ENCODE measurements at regions of chr14 and their contacts with region 1.

Region 1: GRCh38 chr14:99266181-99267178 is 5.5 kb downstream of the BCL11B start:
- DNase-seq: peak; percentile 82
- ATAC-seq: peak; percentile 11; the same call in 1 of the 2 replicates
- H3K4me3 Mint-ChIP-seq: peak overlapping the region; percentile 57
- H3K27ac Mint-ChIP-seq: peak overlapping the region; percentile 28; the same call in 1 of the 2 replicates
- H3K4me1 Mint-ChIP-seq: peaks cover 72% of the 10 kb centered on the region
- H3K27me3 Mint-ChIP-seq: no peaks in the 10 kb centered on the region; the same call in 1 of the 2 replicates
- CTCF ChIP-seq: peak; percentile 94

Region 2: GRCh38 chr14:99035712-99036610 is 230.5 kb before region 1 on chr14:
- CTCF ChIA-PET with region 1: interaction called, 15 read pairs
- POLR2A ChIA-PET with region 1: no interaction called
- DNase-seq: peak; percentile 73
- ATAC-seq: peak; percentile 86
- H3K4me3 Mint-ChIP-seq: no peak overlapping the region
- H3K27ac Mint-ChIP-seq: no peak overlapping the region
- H3K4me1 Mint-ChIP-seq: peaks cover 23% of the 10 kb centered on the region
- H3K27me3 Mint-ChIP-seq: no peaks in the 10 kb centered on the region
- CTCF ChIP-seq: no peak

Region 3: DNA sequence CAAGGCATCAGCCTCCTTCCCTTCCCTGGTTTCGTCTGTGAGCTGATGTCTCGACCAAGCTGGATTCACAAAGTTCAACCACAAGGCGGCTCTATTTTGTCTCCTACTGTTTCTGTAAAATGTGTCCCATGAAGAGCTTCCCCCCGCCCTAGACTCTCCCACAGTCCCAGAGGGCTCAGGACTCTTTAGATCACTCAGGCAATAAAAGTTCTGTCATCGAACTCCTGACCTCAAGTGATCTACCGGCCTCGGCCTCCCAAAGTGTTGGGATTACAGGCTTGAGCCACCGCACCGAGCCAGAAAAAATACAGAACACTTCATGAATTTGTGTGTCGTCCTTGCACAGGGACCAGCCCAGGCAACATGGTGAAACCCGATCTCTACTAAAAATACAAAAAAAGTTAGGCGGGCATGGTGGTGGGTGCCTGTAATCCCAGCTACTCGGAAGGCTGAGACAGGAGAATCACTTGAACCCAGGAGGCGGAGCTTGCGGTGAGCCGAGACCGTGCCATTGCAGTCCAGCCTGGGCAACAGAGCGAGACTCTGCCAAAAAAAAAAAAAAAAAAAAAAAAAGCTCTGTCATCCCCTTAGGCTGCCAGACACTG is 143.9 kb before region 1 on chr14:
- CTCF ChIA-PET with region 1: interaction called, 20 read pairs
- POLR2A ChIA-PET with region 1: no interaction called
- DNase-seq: no peak
- ATAC-seq: peak; percentile 17
- H3K4me3 Mint-ChIP-seq: no peak overlapping the region
- H3K27ac Mint-ChIP-seq: peak overlapping the region; percentile 53; the same call in 1 of the 2 replicates
- H3K4me1 Mint-ChIP-seq: peaks cover 22% of the 10 kb centered on the region
- H3K27me3 Mint-ChIP-seq: peaks cover 8% of the 10 kb centered on the region
- CTCF ChIP-seq: no peak

Region 4: GRCh38 chr14:99188731-99189191 is 77.7 kb before region 1 on chr14:
- CTCF ChIA-PET with region 1: interaction called, 17 read pairs
- POLR2A ChIA-PET with region 1: interaction called, 3 read pairs
- DNase-seq: peak; percentile 73
- ATAC-seq: peak; percentile 91
- H3K4me3 Mint-ChIP-seq: no peak overlapping the region
- H3K27ac Mint-ChIP-seq: 0 out of 2 replicates have a peak overlapping the region, but pooled peaks have one; percentile 57
- H3K4me1 Mint-ChIP-seq: peaks cover 52% of the 10 kb centered on the region
- H3K27me3 Mint-ChIP-seq: no peaks in the 10 kb centered on the region
- CTCF ChIP-seq: peak; percentile 48

Region 5: GRCh38 chr14:99224116-99224910 is 42.2 kb before region 1 on chr14:
- CTCF ChIA-PET with region 1: interaction called, 10 read pairs
- POLR2A ChIA-PET with region 1: no interaction called
- DNase-seq: peak; percentile 68
- ATAC-seq: peak; percentile 92
- H3K4me3 Mint-ChIP-seq: no peak overlapping the region
- H3K27ac Mint-ChIP-seq: peak overlapping the region; percentile 84; the same call in 1 of the 2 replicates
- H3K4me1 Mint-ChIP-seq: peaks cover 40% of the 10 kb centered on the region
- H3K27me3 Mint-ChIP-seq: no peaks in the 10 kb centered on the region
- CTCF ChIP-seq: no peak

Region 6: DNA sequence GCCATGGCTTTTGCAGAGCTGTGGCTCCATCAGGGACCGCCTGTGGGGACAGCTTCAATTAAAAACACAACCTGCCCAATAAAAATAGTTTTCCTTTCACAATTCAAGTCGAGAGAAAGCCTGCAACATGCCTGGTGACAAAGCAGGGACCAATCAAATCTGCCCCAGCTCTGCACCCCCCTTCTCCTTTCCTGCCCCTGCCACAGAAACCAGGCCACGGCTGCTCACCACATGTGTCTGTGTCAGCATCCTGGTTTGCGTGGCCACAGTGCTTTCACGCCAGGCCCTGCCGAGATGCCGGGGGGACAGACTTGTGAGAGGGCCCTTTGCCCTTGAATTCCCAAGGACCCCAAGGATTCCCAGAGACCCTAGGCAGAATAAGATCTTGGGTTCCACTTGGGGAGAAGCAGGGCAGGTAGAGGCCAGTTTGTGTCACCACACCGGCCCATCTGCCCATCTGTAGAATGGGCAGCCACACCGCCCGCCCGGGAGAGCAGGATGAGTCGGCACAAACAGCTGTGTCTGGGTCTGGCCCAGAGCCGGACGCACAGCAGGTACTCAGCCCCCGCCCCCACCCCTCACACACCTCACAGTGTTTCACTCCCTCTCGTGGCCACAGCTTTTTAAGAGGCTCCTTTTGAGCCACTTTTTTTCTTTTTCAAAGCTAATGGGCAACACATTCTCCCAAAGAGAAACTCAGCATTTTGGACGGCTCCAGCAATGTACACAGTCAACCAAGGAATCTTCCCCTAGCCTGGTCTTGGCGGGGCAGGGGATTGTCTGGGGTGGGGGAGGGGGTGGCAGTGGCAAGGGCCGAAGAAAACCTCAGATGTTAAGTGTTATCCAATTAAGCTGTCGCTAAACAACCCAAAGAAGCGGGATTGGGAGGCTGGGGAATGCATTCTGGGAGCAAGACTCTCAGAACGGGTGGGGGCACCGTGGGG is 36.0 kb before region 1 on chr14:
- CTCF ChIA-PET with region 1: interaction called, 19 read pairs
- POLR2A ChIA-PET with region 1: no interaction called
- DNase-seq: no peak
- ATAC-seq: no peak
- H3K4me3 Mint-ChIP-seq: peak overlapping the region; percentile 65
- H3K27ac Mint-ChIP-seq: peak overlapping the region; percentile 93
- H3K4me1 Mint-ChIP-seq: peaks cover 60% of the 10 kb centered on the region
- H3K27me3 Mint-ChIP-seq: no peaks in the 10 kb centered on the region
- CTCF ChIP-seq: no peak

Region 7: DNA sequence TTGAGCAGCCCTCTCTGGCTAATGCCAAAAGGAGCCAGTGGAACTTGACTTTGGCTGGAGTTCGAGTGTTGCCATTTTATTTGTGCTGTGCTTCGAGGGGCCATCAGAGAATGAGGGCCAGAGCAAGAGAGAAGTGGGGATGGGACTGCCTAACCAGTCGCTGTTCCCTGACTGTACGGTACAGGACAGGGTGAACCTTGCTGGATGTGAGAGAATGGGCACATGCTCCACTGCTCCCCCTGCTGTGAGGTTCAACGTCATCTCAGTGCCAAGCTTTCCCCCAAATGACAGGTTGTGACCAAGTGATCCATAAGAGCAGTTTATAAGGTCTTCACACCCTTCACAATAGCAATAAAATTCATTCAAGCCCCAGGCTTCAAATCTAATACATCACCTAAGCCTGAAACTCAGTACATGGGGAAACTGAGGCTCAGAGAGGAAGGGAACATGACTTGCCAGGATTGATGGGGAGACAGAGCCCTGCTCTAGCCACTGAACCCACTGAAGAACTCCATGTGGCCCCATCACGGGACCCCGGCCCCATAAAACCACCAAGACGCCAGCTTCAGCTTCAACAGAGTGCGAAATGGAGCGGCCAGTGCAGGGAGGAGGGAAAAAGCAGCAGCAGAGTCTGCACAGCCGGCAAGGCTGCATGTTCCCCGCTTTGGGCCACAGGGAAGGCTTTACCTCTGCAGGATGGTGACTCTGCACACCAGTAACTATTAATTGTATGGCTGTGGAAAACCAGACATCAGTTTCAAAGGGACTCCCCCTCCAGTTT is 60.8 kb after region 1 on chr14:
- CTCF ChIA-PET with region 1: no interaction called
- POLR2A ChIA-PET with region 1: no interaction called
- DNase-seq: no peak
- ATAC-seq: no peak
- H3K4me3 Mint-ChIP-seq: no peak overlapping the region
- H3K27ac Mint-ChIP-seq: no peak overlapping the region
- H3K4me1 Mint-ChIP-seq: 0 out of 2 replicates have a peak, but pooled peaks cover 4% of the 10 kb centered on the region
- H3K27me3 Mint-ChIP-seq: no peaks in the 10 kb centered on the region; the same call in 1 of the 2 replicates
- CTCF ChIP-seq: no peak

Region 8: DNA sequence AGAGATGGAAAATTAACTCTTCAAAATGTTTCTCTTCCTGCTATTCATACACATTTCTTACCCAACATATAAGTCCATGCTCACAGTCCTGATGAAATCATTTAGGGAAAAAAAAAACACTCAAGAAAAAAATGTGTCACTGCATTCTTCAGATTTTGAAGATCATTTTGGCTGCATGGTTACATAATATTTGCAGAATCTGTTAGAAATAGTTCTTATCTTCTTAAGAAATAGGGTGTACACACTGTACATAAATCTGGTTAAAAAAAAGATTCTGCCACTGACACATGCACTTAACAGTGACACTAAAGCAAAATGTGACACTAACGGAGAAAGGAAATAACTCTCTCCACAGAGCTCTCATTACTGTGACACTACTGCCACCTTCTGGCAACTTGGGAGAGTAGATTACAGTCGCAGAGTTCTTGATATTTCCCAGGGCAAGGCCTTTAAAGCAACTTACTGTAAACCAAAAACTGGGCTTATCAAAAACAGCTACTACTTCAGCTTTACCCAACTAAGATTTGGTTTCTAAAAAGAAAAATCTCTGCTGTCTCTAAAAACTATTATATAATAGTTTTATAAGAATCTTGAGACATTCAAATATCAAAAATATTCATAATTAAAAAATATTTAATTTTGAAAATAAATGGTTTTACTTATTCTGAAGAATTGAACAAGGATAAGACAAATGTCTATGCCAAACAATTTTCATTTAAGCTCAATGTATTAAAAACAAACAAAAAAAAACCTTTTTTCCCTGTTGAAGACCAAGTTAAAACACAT is 149.2 kb after region 1 on chr14:
- CTCF ChIA-PET with region 1: interaction called, 16 read pairs
- POLR2A ChIA-PET with region 1: no interaction called
- DNase-seq: peak; percentile 52
- ATAC-seq: peak; percentile 35
- H3K4me3 Mint-ChIP-seq: peak overlapping the region; percentile 8
- H3K27ac Mint-ChIP-seq: peak overlapping the region; percentile 16
- H3K4me1 Mint-ChIP-seq: peaks cover 61% of the 10 kb centered on the region
- H3K27me3 Mint-ChIP-seq: no peaks in the 10 kb centered on the region
- CTCF ChIP-seq: peak; percentile 70